Astrocyte of the cerebellum (primary cell): ENCODE measurements at regions of chr5 and their contacts with region 1.

Region 1: DNA sequence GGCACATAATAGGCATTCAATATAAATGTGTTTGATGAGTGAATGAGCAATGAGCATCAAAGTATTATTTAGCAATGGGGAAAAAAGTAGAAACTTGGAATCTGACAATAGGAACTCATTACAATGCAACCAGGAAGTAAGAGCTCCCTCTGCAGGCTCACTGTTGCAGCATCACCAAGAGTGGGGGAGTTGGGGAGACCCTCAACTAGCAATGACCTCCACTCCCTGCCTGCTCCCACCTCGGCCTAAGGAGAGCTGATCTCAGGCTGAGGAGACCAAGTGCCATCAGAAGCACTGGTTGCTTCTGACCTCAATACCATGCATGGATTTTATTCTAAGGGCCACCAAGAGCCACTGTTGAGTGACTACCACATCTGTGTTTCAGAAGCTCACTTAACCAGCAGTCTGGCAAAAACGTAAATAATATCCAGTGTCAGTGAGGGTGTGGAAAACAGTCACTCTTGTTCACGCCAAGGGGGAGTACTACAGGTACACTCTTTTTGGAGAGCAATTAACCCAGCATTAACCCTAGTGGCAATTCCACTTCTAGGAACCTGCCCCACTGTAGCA is 8.0 kb downstream of the VDAC1 start:
- DNase-seq: no peak
- H3K4me3 ChIP-seq: no peak overlapping the region
- CTCF ChIP-seq: peak; percentile 59

Region 2: GRCh38 chr5:133075572-133076536 is 920.9 kb before region 1 on chr5:
- in situ Hi-C with region 1: loop called (anchors 25 kb)
- DNase-seq: no peak
- H3K4me3 ChIP-seq: no peak overlapping the region
- CTCF ChIP-seq: no peak